Heart right ventricle (tissue), 16 donors: ENCODE measurements at regions of chr6 and their contacts with region 1.

Region 1: GRCh38 chr6:12369781-12370262 is 79.7 kb downstream of the EDN1 start:
- DNase-seq: no peak
- ATAC-seq: peak in 3 of 8 donors; percentile 37 to 53 (median 48)
- H3K4me3 ChIP-seq: no peak overlapping the region
- H3K27ac ChIP-seq: no peak overlapping the region
- H3K4me1 ChIP-seq: peaks cover 0 to 20% (median 8%) of the 10 kb centered on the region in 9 donors
- H3K27me3 ChIP-seq: no peaks in the 10 kb centered on the region
- CTCF ChIP-seq: peak in 1 of 9 donors; percentile 15

Region 2: GRCh38 chr6:11912426-11912825 is 457.4 kb before region 1 on chr6:
- intact Hi-C with region 1: loop called in 1 of 10 experiments (anchors 5 kb)
- DNase-seq: no peak
- ATAC-seq: no peak
- H3K4me3 ChIP-seq: no peak overlapping the region
- H3K27ac ChIP-seq: no peak overlapping the region
- H3K4me1 ChIP-seq: no peaks in the 10 kb centered on the region
- H3K27me3 ChIP-seq: no peaks in the 10 kb centered on the region
- CTCF ChIP-seq: peak in 3 of 9 donors; percentile 7 to 30 (median 10)

Region 3: GRCh38 chr6:12436683-12437082 is 66.9 kb after region 1 on chr6:
- intact Hi-C with region 1: loop called in 1 of 10 experiments (anchors 5 kb)
- DNase-seq: no peak
- ATAC-seq: peak in 1 of 8 donors; percentile 22
- H3K4me3 ChIP-seq: no peak overlapping the region
- H3K27ac ChIP-seq: no peak overlapping the region
- H3K4me1 ChIP-seq: peaks cover 0 to 13% (median 8%) of the 10 kb centered on the region in 9 donors
- H3K27me3 ChIP-seq: no peaks in the 10 kb centered on the region
- CTCF ChIP-seq: no peak

Region 4: DNA sequence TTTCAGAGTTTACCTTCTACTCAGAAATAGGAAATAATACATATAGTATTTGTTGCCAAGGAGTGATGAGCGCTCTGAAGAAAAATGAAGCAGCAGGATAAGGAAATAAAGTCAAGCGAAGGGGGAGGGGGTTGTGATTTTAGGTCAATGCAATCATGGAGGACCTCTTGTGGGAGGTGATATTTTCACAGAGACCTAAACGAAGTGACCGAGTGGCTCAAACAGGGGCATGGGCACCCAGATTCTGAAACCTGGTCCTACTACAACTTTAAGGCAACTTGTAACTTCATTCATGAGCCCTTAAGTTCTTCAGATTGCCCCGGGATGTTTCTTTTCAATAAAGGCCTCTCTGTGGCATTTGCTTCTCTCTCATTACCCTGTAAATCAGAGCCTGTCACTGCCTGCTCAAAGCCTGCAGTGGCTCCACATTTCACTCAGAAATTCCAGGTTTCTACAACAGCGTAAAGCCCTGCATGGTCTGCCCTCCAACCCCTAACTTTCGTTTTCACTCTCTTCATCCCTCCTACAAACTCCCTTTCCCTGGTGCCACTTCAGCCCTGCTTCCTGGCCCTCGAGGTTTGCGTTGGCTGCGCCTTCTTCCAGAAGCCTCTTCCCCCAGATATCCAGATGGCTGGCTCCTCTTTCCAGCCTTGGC is 795.8 kb after region 1 on chr6:
- intact Hi-C with region 1: loop called in 1 of 10 experiments (anchors 5 kb)
- DNase-seq: no peak
- ATAC-seq: no peak
- H3K4me3 ChIP-seq: no peak overlapping the region
- H3K27ac ChIP-seq: no peak overlapping the region
- H3K4me1 ChIP-seq: peaks cover 0 to 14% (median 0%) of the 10 kb centered on the region in 9 donors
- H3K27me3 ChIP-seq: no peaks in the 10 kb centered on the region
- CTCF ChIP-seq: no peak